CD8-positive, alpha-beta T cell (primary cell): ENCODE measurements at regions of chr1 and their contacts with region 1.

Region 1: DNA sequence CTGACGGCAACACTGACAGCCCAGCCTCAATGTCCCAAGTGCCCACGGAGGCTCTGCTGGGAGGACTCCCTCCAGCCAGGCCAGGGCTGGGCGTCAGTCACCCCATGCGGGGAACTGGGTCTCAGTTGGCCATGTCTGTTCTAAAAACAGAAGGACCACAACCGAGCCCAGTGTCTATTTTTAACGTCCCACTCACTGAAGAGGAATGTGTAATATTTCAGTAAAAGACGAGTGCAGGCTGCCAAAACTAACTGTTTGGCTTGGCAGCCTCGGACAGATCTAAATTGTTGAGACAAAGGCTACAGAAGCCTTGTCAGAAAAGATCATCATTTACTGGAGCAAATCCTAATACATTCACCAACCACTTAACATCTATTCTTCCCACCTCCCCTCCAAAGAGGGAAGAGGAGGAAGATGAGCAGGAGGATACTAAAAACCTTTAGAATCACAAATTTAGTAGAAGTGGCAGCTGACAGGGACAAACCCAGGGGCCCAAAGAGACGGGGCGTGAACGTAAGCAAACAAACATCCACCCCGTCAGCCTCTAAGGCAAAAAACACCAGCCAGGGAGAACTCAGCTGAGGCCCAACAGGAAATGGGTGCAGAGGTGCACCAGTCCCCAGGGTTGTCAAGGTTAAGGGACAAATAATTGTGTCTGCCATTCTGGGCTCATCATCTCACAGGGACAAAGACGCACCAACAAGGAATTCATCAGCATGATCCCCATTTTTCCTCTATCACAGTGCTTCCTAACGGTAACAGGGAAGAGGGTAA is 18.7 kb downstream of the C1orf198 start:
- DNase-seq: no peak
- ATAC-seq: no peak
- H3K4me3 ChIP-seq: no peak overlapping the region
- H3K4me3 Mint-ChIP-seq: no peak overlapping the region
- H3K27ac ChIP-seq: no peak overlapping the region
- H3K27ac Mint-ChIP-seq: no peak overlapping the region
- H3K4me1 ChIP-seq: no peaks in the 10 kb centered on the region
- H3K4me1 Mint-ChIP-seq: no peaks in the 10 kb centered on the region
- H3K27me3 ChIP-seq: no peaks in the 10 kb centered on the region
- H3K27me3 Mint-ChIP-seq: no peaks in the 10 kb centered on the region
- CTCF ChIP-seq: no peak

Region 2: DNA sequence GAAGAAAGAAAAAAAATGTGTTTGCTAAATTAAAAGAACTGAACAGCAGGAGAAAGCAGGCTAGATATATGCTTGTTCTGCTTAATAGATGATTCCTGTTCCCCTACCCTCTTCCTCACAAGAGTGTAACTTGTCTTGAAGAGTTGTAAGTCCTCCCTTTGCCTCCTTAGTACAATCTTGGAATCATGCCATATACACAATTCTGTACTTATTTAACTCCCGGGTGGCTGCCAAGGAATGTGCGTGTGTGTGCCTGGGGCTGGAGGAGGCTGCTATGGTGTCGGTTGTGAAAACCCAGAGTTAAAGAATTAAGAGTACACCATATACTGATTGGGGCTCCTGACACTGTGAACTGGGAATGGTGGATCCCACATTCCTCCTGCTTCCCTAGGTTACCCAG is 1586.1 kb after region 1 on chr1:
- CTCF ChIA-PET with region 1: no interaction called
- POLR2A ChIA-PET with region 1: no interaction called
- intact Hi-C with region 1: loop called in 1 of 2 experiments (anchors 5 kb)
- DNase-seq: no peak
- ATAC-seq: no peak
- H3K4me3 ChIP-seq: no peak overlapping the region
- H3K4me3 Mint-ChIP-seq: no peak overlapping the region
- H3K27ac ChIP-seq: no peak overlapping the region
- H3K27ac Mint-ChIP-seq: no peak overlapping the region
- H3K4me1 ChIP-seq: no peaks in the 10 kb centered on the region
- H3K4me1 Mint-ChIP-seq: no peaks in the 10 kb centered on the region
- H3K27me3 ChIP-seq: no peaks in the 10 kb centered on the region
- H3K27me3 Mint-ChIP-seq: no peaks in the 10 kb centered on the region
- CTCF ChIP-seq: no peak